Sigmoid colon (tissue), 7 donors: ENCODE measurements at regions of chr9 and their contacts with region 1.

Region 1: GRCh38 chr9:14133394-14133793 is 180.5 kb downstream of the NFIB start:
- DNase-seq: no peak
- H3K4me3 ChIP-seq: no peak overlapping the region
- H3K27ac ChIP-seq: peak overlapping the region; percentile 2 to 60 (median 35)
- H3K4me1 ChIP-seq: peaks cover 0 to 33% (median 23%) of the 10 kb centered on the region in 4 donors
- H3K27me3 ChIP-seq: no peaks in the 10 kb centered on the region
- CTCF ChIP-seq: no peak
- EP300 ChIP-seq: no peak
- POLR2A ChIP-seq: no peak

Region 2: DNA sequence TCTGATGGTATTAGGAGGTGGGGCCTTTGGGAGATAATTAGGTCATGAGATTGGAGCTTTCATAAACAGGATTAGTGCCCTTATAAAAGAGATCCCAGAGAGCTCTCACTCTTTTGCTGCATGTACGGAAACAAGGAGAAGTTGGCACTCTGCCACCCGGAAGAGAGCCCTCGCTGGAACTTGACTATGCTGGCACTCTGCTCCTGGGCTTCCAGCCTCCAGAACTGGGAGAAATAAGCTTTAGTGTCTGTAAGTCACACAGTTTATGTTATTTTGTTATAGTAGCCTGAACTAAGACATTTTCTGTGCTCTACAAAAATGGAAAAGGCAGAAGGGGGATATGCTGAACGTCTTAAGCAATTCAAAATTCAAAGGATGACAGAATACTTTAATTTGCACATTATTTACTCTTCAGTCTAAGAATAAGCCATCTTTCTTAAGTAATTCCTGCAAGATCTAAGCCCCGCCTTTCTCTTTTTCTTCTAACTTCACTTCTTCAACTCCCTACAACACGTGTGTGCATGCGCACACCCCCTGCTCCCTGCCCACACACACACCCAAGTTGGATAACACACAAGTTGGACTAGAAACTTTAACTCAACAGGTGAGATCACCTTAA is 163.2 kb after region 1 on chr9:
- intact Hi-C with region 1: loop called (anchors 5 kb)
- DNase-seq: no peak
- H3K4me3 ChIP-seq: no peak overlapping the region
- H3K27ac ChIP-seq: peak overlapping the region in 2 of 4 donors; percentile 7 to 11
- H3K4me1 ChIP-seq: peaks cover 0 to 73% (median 54%) of the 10 kb centered on the region in 4 donors
- H3K27me3 ChIP-seq: no peaks in the 10 kb centered on the region
- CTCF ChIP-seq: no peak
- EP300 ChIP-seq: no peak
- POLR2A ChIP-seq: no peak

Region 3: DNA sequence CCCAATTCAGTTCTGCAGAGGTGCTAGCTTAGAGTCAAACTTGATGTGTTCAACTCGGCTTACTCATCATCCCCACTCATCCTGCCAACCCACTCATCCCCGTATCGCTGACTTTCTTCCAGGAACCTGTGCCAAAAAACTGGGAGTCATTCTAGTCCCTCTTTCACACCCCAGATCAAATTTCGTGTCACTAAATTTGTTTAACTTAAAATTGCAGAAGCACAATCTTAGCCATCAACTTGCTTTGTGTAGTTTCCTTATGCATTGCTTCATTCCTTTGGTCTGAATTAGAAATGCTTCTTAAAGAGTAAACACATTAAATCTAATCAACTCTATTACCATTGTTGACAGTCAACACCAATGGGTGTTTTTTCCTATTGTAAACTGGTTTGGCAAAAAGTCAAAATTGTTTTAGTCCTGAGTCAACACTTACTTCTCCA is 1011.2 kb after region 1 on chr9:
- intact Hi-C with region 1: no loop called
- DNase-seq: no peak
- H3K4me3 ChIP-seq: no peak overlapping the region
- H3K27ac ChIP-seq: no peak overlapping the region
- H3K4me1 ChIP-seq: peaks cover 0 to 17% (median 6%) of the 10 kb centered on the region in 4 donors
- H3K27me3 ChIP-seq: no peaks in the 10 kb centered on the region
- CTCF ChIP-seq: no peak
- EP300 ChIP-seq: no peak
- POLR2A ChIP-seq: no peak